MCF 10A (cell line): ENCODE measurements at regions of chr7 and their contacts with region 1.

Region 1: DNA sequence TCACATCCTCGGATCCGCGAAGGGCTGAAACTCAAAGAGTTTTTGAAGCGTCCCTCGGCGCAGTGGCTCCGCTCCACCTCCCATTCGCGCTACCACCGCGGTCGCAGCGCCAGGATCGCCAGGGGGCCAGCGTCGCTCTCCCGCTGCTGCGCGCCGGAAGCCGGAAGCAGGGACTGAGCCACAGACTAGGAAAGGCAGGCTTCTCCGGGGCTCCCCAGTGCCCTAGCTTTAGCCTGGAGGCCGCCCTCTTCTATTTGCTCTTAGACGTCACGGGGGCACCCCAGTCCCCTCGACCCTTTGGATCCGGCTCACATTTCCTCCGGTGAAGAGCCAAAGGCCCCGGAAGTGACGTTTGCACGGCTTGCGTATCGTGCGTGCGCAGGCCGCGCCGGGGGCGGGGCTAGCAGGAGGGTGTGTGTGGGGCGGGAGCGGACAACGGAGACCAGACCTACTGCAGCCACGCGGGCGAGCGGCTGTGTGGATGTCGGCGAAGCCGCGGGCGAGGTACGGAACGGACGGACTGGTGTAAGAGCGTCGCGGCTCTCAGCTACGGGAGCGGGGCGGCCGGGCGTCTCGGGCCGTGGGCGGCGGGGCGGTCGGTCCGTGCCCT is 25.5 kb downstream of the KCTD7 start:
- DNase-seq: peak; percentile 97
- H3K4me3 Mint-ChIP-seq: peak overlapping the region; percentile 88
- H3K27ac Mint-ChIP-seq: peak overlapping the region; percentile 97
- H3K4me1 Mint-ChIP-seq: peaks cover 13% of the 10 kb centered on the region
- H3K27me3 Mint-ChIP-seq: no peaks in the 10 kb centered on the region
- CTCF ChIP-seq: no peak

Region 2: DNA sequence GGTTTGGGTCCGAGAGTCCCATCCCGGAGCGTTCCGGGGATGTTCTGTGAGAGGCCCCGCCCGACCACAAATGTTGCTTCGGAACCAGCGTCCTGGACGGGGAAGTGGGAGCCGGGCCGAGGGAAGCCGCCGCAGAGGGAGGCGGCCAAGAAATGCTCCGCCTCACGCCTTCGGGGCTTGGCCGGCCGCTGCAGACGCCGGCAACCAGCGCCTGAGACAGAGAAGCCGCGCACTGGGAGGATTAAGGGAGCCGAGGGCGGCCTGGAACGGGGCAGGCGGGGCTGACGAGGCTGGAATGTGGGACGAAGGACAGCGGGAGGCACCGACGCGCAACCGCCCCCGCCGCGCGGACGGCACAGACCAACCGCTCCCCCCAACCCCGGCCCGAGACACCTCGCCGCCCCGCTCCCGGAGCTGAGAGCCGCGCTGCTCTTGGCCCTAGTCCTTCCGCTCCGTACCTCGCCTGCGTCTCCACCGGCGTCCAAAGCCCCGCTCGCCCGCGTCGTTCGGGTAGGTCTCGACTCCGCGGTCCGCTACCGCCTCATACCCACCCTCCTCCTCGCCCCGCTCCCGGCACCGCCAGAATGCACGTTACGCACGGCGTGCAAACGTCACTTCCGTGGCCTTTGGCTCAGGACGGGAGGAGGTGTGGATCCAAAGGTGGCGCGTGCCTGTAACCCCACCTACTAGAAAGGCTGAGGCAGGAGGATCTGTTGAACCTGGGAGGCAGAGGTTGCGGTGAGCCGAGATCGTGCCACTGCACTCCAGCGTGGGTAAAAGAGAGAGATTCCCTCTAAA is 62.2 kb before region 1 on chr7:
- CTCF ChIA-PET with region 1: interaction called, 4 read pairs
- POLR2A ChIA-PET with region 1: interaction called, 22 read pairs
- intact Hi-C with region 1: loop called (anchors 1 kb)
- DNase-seq: peak; percentile 94
- H3K4me3 Mint-ChIP-seq: peak overlapping the region; percentile 94
- H3K27ac Mint-ChIP-seq: peak overlapping the region; percentile 98
- H3K4me1 Mint-ChIP-seq: peaks cover 27% of the 10 kb centered on the region
- H3K27me3 Mint-ChIP-seq: no peaks in the 10 kb centered on the region
- CTCF ChIP-seq: no peak

Region 3: GRCh38 chr7:66634816-66635215 is 19.4 kb before region 1 on chr7:
- CTCF ChIA-PET with region 1: interaction called, 4 read pairs
- POLR2A ChIA-PET with region 1: interaction called, 44 read pairs
- intact Hi-C with region 1: no loop called
- DNase-seq: no peak
- H3K4me3 Mint-ChIP-seq: no peak overlapping the region
- H3K27ac Mint-ChIP-seq: no peak overlapping the region
- H3K4me1 Mint-ChIP-seq: peaks cover 10% of the 10 kb centered on the region
- H3K27me3 Mint-ChIP-seq: no peaks in the 10 kb centered on the region
- CTCF ChIP-seq: no peak

Region 4: GRCh38 chr7:66669088-66669487 is 14.9 kb after region 1 on chr7:
- CTCF ChIA-PET with region 1: interaction called, 5 read pairs
- POLR2A ChIA-PET with region 1: interaction called, 21 read pairs
- intact Hi-C with region 1: no loop called
- DNase-seq: no peak
- H3K4me3 Mint-ChIP-seq: no peak overlapping the region
- H3K27ac Mint-ChIP-seq: no peak overlapping the region
- H3K4me1 Mint-ChIP-seq: no peaks in the 10 kb centered on the region
- H3K27me3 Mint-ChIP-seq: no peaks in the 10 kb centered on the region
- CTCF ChIP-seq: no peak

Region 5: GRCh38 chr7:66693331-66693730 is 39.1 kb after region 1 on chr7:
- CTCF ChIA-PET with region 1: no interaction called
- POLR2A ChIA-PET with region 1: no interaction called
- intact Hi-C with region 1: no loop called
- DNase-seq: no peak
- H3K4me3 Mint-ChIP-seq: no peak overlapping the region
- H3K27ac Mint-ChIP-seq: no peak overlapping the region
- H3K4me1 Mint-ChIP-seq: peaks cover 19% of the 10 kb centered on the region
- H3K27me3 Mint-ChIP-seq: no peaks in the 10 kb centered on the region
- CTCF ChIP-seq: no peak

Region 6: DNA sequence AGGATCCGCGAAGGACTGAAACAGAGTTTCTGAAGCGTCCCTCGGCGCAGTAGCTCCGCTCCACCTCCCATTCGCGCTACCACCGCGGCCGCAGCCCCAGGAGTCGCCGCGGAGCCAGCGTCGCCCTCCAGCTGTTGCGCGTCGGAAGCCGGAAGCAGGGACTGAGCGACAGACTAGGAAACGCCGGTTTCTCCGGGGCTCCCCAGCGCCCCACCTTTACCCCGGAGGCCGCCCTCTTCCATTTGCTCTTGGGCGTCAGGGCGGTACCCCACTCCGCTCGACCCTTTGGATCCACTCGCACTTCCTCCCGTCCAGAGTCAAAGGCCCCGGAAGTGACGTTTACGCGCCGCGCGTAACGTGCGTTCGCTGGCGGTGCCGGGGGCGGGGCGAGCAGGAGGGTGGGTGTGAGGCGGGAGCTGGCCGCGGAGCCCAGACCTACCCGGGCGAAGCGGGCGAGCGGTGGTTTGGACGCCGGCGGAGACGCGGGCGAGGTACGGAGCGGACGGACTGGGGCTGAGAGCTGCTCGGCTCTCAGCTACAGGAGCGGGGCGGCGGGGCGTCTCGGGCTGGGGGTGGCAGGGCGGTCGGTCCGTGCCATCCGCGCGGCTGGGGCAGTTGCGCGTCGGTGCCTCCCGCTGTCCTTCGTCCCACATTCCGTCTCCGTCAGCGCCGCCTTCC is 86.2 kb after region 1 on chr7 and contains the start of gene RABGEF1:
- CTCF ChIA-PET with region 1: no interaction called
- POLR2A ChIA-PET with region 1: interaction called, 28 read pairs
- intact Hi-C with region 1: no loop called
- DNase-seq: peak; percentile 96
- H3K4me3 Mint-ChIP-seq: peak within 1 kb of the TSS; percentile 90
- H3K27ac Mint-ChIP-seq: peak within 1 kb of the TSS; percentile 97
- H3K4me1 Mint-ChIP-seq: peaks cover 9% of the 10 kb centered on the region
- H3K27me3 Mint-ChIP-seq: no peaks in the 10 kb centered on the region
- CTCF ChIP-seq: no peak
- total RNA-seq, gene RABGEF1: 49.5 and 57.4 TPM in 2 replicates